ENCODE measurements at regions of chr1 and their contacts with region 1.

Region 1: DNA sequence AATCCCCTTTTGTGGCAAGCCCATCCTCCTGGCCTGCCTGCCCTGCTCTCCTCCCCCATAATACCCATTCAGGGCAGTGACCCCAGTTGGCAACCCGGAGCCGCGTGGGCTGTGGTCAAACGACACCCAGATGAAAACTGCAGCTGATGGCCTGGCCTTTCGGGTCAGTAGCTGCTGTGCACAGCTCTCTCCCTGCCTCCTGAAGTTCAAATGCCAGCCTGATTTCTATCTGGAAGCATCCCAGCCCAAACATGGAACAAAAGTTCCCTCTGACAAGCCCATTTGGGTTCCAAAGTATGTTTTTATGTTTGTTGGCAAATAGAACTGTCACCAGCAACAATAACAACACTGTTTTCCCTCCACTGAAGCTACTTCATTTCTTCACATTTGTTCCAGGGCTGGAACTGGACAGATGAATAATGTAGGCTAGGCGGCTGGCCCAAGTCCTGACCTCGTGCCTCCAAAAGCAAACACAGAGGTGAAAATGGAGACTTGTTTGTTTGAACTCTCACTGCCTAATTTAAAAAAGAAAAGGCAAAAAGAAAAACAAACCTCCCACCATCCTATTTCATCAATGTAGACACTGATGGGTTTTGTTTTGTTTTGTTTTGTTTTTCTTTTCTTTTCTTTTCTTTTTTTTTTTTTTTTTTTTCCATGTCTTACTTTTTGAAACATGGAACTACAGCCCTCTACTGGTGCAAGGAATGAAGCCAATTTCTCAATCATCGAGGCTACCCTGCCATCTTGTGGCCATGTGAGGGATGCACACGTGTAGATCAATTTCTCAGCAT is 179.0 kb downstream of the ADSS2 start:
- DNase-seq: peak; percentile 71
- H3K4me3 ChIP-seq: no peak overlapping the region
- H3K27ac ChIP-seq: peak overlapping the region; percentile 85
- H3K4me1 ChIP-seq: peaks cover 23% of the 10 kb centered on the region
- H3K27me3 ChIP-seq: no peaks in the 10 kb centered on the region
- CTCF ChIP-seq: peak; percentile 99 to 100

Region 2: GRCh38 chr1:243343970-243344937 is 928.4 kb before region 1 on chr1:
- CTCF ChIA-PET with region 1: no interaction called
- dilution Hi-C with region 1: loop called (anchors 25 kb)
- in situ Hi-C with region 1: loop called (anchors 5 to 10 kb)
- intact Hi-C with region 1: loop called (anchors 1 kb)
- DNase-seq: peak; percentile 37
- H3K4me3 ChIP-seq: no peak overlapping the region
- H3K27ac ChIP-seq: no peak overlapping the region
- H3K4me1 ChIP-seq: no peaks in the 10 kb centered on the region
- H3K27me3 ChIP-seq: no peaks in the 10 kb centered on the region
- CTCF ChIP-seq: peak; percentile 31 to 66

Region 3: DNA sequence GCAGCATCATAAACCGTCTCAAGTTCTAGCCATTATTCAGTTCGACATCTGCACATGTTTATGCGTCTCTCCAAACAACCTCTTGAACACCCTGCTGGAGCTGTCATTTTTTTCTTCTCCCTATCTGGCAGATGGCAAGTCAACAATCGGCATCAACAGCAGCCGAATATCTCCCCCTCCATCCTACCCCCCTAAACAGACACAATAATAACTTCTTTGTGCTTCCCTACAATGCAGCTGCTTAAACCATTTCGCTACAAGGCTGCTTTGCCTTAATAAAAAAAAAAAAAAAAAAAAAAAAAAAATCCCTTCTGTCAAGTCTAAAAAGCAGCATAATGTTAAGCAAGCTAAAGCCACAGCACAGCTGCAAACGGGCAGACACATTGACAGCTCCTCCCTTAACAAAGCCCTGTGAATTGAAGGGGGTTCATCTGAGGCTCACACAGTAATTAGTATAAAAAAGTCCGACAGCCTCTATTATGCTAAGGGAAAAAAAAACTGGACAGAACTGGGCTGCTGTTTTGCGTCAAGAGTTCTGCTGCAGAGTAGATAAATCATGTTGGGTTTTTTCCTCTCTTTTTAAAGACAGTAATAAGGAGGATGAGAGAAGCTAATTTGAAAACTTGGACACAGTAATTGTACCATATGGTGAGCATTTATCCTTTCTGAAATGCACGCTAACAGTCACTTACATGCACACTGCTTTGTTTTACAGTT is 559.0 kb before region 1 on chr1:
- CTCF ChIA-PET with region 1: no interaction called
- dilution Hi-C with region 1: no loop called
- in situ Hi-C with region 1: loop called in 1 of 2 experiments (anchors 25 kb)
- intact Hi-C with region 1: loop called (anchors 1 kb)
- DNase-seq: no peak
- H3K4me3 ChIP-seq: no peak overlapping the region
- H3K27ac ChIP-seq: no peak overlapping the region
- H3K4me1 ChIP-seq: peaks cover 5% of the 10 kb centered on the region
- H3K27me3 ChIP-seq: no peaks in the 10 kb centered on the region
- CTCF ChIP-seq: no peak

Region 4: GRCh38 chr1:243850452-243851256 is 422.0 kb before region 1 on chr1:
- CTCF ChIA-PET with region 1: no interaction called
- dilution Hi-C with region 1: no loop called
- in situ Hi-C with region 1: no loop called
- intact Hi-C with region 1: loop called (anchors 2 kb)
- DNase-seq: peak; percentile 72
- H3K4me3 ChIP-seq: peak overlapping the region; percentile 60 to 75 (median 69)
- H3K27ac ChIP-seq: peak overlapping the region; percentile 72
- H3K4me1 ChIP-seq: peaks cover 10% of the 10 kb centered on the region
- H3K27me3 ChIP-seq: no peaks in the 10 kb centered on the region
- CTCF ChIP-seq: no peak

Region 5: GRCh38 chr1:244012202-244012601 is 260.5 kb before region 1 on chr1:
- CTCF ChIA-PET with region 1: no interaction called
- dilution Hi-C with region 1: no loop called
- in situ Hi-C with region 1: no loop called
- intact Hi-C with region 1: loop called (anchors 1 kb)
- DNase-seq: peak; percentile 48
- H3K4me3 ChIP-seq: no peak overlapping the region
- H3K27ac ChIP-seq: no peak overlapping the region
- H3K4me1 ChIP-seq: no peaks in the 10 kb centered on the region
- H3K27me3 ChIP-seq: no peaks in the 10 kb centered on the region
- CTCF ChIP-seq: no peak

Region 6: DNA sequence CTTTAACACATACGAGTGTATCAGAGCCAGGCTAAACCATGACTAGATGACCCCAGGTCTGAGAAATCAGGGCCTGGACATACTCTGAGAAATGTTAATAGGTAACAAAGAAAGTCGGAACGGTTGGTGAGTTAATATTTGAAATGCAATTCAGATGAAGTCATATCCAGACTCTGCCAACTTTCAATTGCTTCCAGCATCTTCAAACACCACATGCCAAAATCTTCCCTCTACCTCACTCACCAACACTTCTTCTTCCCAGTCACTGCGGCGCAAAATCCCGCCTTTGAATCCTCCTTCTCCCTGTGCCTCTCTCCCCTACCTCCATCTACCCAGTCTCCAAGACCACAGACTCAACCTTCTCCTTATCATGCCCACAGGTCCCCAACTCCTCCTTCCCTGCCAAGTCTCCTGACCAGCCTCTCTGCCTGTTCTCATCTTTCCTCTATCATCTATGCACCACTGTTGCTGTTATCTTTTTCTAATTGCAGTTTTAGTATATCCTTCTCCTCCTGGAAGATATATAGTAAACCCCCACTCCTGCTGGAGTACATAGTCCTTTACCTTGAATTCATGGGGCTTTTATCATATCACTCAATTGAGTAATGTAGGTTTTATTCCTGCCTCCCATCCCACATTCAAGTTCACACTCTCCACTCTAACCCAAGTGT is 180.2 kb before region 1 on chr1:
- CTCF ChIA-PET with region 1: no interaction called
- dilution Hi-C with region 1: no loop called
- in situ Hi-C with region 1: no loop called
- intact Hi-C with region 1: loop called (anchors 10 kb)
- DNase-seq: no peak
- H3K4me3 ChIP-seq: no peak overlapping the region
- H3K27ac ChIP-seq: no peak overlapping the region
- H3K4me1 ChIP-seq: no peaks in the 10 kb centered on the region
- H3K27me3 ChIP-seq: no peaks in the 10 kb centered on the region
- CTCF ChIP-seq: no peak

Region 7: GRCh38 chr1:244118109-244118761 is 154.4 kb before region 1 on chr1:
- CTCF ChIA-PET with region 1: no interaction called
- dilution Hi-C with region 1: no loop called
- in situ Hi-C with region 1: no loop called
- intact Hi-C with region 1: no loop called
- DNase-seq: no peak
- H3K4me3 ChIP-seq: no peak overlapping the region
- H3K27ac ChIP-seq: no peak overlapping the region
- H3K4me1 ChIP-seq: no peaks in the 10 kb centered on the region
- H3K27me3 ChIP-seq: no peaks in the 10 kb centered on the region
- CTCF ChIP-seq: no peak

Region 8: DNA sequence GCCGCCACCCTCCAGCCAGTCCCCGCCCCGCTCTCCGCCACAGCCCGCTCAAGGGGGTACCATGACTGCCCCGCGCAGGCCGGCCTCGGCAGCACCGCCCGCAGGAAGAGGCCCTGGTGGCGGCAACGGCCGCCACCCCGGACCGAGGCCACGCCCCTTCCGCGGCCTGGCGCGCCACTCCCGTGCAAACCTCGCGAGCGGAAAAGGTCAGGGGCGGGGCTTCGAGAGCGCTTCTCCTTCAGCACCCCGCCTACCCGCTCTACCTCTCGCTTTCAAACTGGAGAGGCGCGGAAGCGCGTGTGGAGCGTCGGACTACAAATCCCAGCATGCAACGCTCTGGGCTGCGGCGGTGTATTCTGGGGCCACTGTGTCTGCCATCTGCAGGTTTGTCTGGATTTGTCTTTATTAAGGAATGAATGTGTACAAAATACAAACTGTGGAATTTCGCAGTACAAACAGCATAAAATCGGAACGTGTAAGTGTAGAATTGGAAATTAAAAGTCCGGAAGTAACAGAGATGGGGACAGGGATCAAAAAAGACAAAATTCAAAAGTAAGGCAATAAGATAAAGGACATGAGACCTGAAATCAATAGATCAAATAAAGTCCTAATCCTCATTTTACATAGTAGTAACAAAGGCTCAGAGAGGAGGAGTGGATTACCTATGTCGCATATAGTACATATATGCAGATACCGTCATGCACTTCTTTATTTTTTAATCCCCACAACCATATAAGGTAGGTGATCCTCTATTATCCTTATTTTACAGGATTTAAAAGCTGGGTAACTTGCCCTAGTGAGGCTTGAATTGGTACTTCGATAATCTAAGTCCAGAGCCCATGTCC is 179.5 kb after region 1 on chr1:
- CTCF ChIA-PET with region 1: no interaction called
- dilution Hi-C with region 1: no loop called
- in situ Hi-C with region 1: no loop called
- intact Hi-C with region 1: loop called (anchors 1 kb)
- DNase-seq: peak; percentile 99
- H3K4me3 ChIP-seq: peak overlapping the region; percentile 49 to 97 (median 50)
- H3K27ac ChIP-seq: peak overlapping the region; percentile 31
- H3K4me1 ChIP-seq: peaks cover 15% of the 10 kb centered on the region
- H3K27me3 ChIP-seq: no peaks in the 10 kb centered on the region
- CTCF ChIP-seq: peak; percentile 32 to 34